ENCODE measurements at regions of chr21 and their contacts with region 1.

Region 1: DNA sequence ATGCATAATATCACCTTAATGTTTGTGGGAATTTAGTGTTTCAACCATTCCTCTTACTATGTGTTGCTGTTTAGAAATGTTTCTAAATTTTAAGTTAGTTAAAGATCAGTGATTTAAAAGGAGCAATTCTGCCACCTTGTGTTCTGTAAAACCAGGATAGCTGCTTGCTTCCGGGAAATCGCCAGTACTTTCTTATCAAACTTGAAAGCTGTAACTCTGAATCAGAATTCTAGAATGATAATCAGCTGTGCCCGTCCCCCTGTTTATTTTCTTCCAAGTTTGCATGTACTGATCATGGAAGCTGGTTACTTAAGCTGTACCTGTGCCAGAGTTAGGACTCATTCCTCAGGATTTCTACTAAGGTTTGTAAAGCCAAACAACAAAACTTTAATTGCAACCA is 656.4 kb downstream of the LTN1 start:
- DNase-seq: no peak
- ATAC-seq: peak; percentile 57 to 65
- H3K4me3 ChIP-seq: no peak overlapping the region
- H3K27ac ChIP-seq: no peak overlapping the region
- H3K4me1 ChIP-seq: peaks cover 0 to 18% of the 10 kb centered on the region in 2 donors
- H3K27me3 ChIP-seq: no peaks in the 10 kb centered on the region
- CTCF ChIP-seq: peak in 4 of 5 experiments; percentile 21 to 64 (median 56)
- POLR2A ChIP-seq: no peak

Region 2: DNA sequence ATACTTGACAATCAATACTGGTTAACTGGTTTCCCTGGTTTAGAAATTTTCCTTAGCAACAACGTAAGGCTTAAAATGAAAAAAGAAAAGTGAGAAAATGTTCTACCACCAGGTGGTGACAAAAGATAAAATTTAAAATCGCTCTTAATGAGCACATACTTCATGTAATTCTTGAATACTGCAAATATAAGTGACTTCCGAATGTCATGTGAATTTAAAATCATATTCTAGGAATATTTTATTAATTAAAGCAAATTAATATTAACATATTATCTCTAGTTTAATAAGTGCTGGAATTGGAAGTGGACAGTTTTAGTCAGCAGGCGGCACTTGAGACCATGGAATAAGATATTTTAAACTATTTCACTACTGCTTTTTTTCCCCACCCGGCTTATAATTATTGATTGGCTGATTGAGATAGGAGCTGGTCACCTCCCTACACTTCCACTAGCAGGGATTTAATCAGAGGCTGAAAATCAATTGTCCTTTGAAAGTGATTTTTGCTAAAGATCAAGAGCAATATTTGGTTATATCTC is 1486.1 kb before region 1 on chr21:
- in situ Hi-C with region 1: loop called (anchors 5 to 25 kb)
- intact Hi-C with region 1: loop called (anchors 2 kb)
- DNase-seq: no peak
- ATAC-seq: no peak
- H3K4me3 ChIP-seq: peak overlapping the region in 3 of 4 donors; percentile 9 to 28 (median 15)
- H3K27ac ChIP-seq: no peak overlapping the region
- H3K4me1 ChIP-seq: no peaks in the 10 kb centered on the region
- H3K27me3 ChIP-seq: no peaks in the 10 kb centered on the region
- CTCF ChIP-seq: peak; percentile 64 to 87 (median 67)
- POLR2A ChIP-seq: no peak

Region 3: GRCh38 chr21:27700974-27701614 is 635.2 kb before region 1 on chr21:
- in situ Hi-C with region 1: loop called (anchors 10 to 25 kb)
- intact Hi-C with region 1: loop called (anchors 10 kb)
- DNase-seq: peak; percentile 47 to 78
- ATAC-seq: peak; percentile 94 to 97
- H3K4me3 ChIP-seq: peak overlapping the region in 1 of 4 donors; percentile 6
- H3K27ac ChIP-seq: no peak overlapping the region
- H3K4me1 ChIP-seq: peaks cover 0 to 7% of the 10 kb centered on the region in 2 donors
- H3K27me3 ChIP-seq: no peaks in the 10 kb centered on the region
- CTCF ChIP-seq: peak; percentile 83 to 87 (median 86)
- POLR2A ChIP-seq: no peak

Region 4: DNA sequence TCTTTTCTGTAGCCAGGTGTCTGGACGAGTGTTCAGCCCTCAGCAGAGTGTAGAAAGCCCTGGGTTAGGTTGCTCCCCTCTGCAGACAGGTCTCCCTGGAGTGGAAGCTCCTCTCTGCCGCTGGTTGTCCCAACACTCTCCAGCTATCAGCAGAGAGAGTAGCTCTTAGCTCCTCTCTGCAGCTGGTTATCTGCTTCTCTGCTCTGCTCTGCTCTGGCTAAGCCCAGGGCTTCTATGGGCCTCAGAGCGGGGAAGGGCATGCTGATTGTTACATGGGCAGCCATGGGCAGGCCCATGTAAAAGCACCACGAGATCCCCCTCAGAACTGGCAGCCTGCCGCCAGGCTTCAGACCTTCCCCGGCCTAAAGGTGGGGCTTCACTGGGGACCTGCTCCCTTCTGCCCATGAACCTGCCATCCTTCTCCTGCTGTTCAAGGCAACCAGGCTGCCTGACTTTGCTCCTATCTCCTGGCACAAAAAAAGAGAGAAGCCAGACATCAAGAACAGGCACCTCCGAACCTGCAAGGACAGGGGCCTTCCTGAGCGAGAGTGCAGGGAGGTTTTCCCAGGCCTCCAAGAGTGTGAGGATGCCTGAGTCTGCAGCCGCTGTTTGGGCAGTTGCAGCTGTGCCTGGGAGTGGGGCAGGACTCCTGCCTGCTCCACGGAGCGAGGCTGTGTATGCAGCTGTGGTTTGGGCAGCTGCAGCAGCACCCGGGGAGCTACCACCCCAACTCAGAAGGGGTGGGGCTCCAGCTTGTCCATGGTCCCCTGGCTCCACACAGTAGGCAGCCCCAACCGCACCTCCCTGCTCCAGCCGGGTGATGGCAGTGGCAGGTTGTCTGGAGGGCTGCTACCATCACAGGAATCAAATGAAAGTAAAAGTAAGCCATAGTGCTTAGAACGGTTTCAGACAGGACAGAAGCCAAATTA is 317.3 kb before region 1 on chr21:
- in situ Hi-C with region 1: loop called in 1 of 4 experiments (anchors 25 kb)
- intact Hi-C with region 1: loop called (anchors 2 kb)
- DNase-seq: peak in 1 of 2 donors; percentile 31
- ATAC-seq: peak; percentile 58 to 89
- H3K4me3 ChIP-seq: peak overlapping the region in 1 of 4 donors; percentile 15
- H3K27ac ChIP-seq: no peak overlapping the region
- H3K4me1 ChIP-seq: no peaks in the 10 kb centered on the region
- H3K27me3 ChIP-seq: no peaks in the 10 kb centered on the region
- CTCF ChIP-seq: peak in 4 of 5 experiments; percentile 25 to 53 (median 26)
- POLR2A ChIP-seq: no peak

Region 5: GRCh38 chr21:28069450-28069923 is 266.8 kb before region 1 on chr21:
- in situ Hi-C with region 1: loop called in 1 of 4 experiments (anchors 25 kb)
- intact Hi-C with region 1: loop called (anchors 10 kb)
- DNase-seq: peak in 1 of 2 donors; percentile 25
- ATAC-seq: peak; percentile 63 to 70
- H3K4me3 ChIP-seq: peak overlapping the region; percentile 9 to 38 (median 20)
- H3K27ac ChIP-seq: peak overlapping the region; percentile 87 to 91 (median 88)
- H3K4me1 ChIP-seq: peaks cover 17 to 43% of the 10 kb centered on the region in 2 donors
- H3K27me3 ChIP-seq: no peaks in the 10 kb centered on the region
- CTCF ChIP-seq: no peak
- POLR2A ChIP-seq: no peak

Region 6: DNA sequence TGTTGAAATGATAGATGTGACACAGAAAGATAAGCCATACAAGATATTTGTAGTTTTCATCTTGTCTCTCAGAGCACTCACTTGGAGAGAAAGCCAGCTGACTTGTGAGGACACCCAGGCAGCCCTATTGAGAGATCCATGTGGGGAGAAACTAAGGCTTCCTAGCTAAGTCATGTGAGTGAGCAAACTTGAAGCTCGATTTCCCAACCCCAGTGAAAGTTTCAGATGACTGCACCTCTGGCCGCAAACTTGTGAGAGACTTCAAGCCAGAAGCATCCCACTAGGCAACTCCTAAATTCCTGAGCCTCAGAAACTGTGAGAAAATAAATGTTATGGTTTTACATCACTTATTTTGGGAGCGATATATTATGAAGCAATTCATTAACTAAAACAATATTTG is 175.9 kb before region 1 on chr21:
- in situ Hi-C with region 1: no loop called
- intact Hi-C with region 1: no loop called
- DNase-seq: peak; percentile 6 to 38
- ATAC-seq: peak; percentile 73 to 80
- H3K4me3 ChIP-seq: no peak overlapping the region
- H3K27ac ChIP-seq: no peak overlapping the region
- H3K4me1 ChIP-seq: no peaks in the 10 kb centered on the region
- H3K27me3 ChIP-seq: no peaks in the 10 kb centered on the region
- CTCF ChIP-seq: no peak
- POLR2A ChIP-seq: no peak

Measured in gastrocnemius medialis (tissue), 4 donors.